ENCODE measurements at regions of chr15 and their contacts with region 1.

Region 1: DNA sequence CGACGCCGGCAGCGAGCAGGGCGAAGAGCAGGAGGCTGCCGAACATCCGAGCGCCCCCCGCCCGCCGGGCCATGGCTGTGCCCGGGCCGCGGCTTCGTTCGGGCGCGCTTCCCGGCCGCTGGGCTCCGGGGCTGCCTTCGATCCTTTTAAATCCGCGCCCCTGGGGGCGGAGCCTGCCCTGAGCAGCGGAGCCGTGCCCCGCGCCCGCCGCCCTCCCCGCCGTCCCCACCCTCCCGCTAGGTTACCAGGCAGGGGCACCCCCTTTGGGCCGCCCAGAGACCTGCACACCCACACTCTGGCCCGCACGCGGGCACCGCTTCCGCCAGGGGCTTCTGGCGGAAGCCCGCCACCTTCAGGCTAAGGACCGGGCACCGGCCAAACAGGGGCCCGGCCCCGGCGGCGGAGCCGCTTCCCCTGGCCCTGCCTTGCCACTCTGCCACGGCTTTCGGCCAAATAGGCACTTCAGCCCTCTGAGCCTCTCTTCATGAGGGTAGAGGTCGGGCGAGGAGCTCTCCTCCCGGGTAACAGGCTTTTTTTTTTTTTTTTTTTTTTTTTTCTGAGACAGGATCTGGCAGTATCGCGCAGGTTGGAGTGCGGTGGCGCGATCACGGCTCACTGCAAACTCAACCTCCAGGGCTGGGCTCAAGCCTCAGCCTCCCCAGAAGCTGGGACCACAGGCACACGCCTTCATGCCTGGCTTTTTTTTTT is at the start of gene NMB:
- DNase-seq: peak; percentile 83
- ATAC-seq: peak; percentile 64 to 73
- total RNA-seq, gene NMB: 14.7 to 31.6 TPM

Region 2: GRCh38 chr15:84594617-84595290 is 63.5 kb before region 1 on chr15:
- intact Hi-C with region 1: no loop called
- DNase-seq: no peak
- ATAC-seq: no peak

Region 3: DNA sequence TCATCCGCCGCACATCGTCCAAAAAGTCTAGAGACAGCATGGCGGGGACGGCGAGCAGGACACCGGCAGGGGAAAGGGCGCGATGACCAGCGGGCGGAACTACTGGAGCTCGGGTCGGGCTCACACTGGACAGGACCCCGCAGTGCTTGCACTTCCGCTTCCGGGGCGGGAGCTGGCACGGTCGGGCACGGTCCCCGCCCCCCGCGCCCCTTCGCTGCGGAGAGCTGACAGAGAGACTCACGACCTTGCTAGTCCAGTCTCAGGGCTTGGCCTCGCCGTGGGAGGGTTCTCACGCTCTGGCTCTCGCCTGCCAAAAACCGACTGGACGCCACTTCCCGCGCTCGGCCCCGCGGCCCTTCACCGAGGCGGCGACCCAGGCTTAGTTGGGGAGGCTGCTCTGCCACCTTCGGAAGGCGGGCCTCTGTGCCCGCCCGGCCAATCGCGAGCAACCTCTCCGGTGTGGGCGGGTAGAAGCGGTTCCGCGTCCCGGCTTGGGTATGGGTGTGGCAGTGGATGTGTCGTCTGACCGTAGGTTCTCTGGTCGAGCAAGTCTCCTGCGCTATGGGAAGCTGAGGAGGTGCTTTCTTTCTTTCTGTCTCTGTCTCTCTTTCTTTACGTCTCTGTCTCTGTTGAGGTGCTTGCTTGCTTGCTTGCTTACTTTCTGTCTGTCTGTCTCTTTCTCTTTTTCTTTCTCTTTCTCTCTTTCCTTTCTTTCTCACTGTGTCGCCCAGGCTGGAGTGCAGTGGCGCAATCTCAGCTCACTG is 58.0 kb after region 1 on chr15 and contains the start of gene SEC11A:
- intact Hi-C with region 1: loop called (anchors 10 kb)
- DNase-seq: peak; percentile 96
- ATAC-seq: peak; percentile 98 to 99
- total RNA-seq, gene SEC11A: 98.1 to 104 TPM

Region 4: GRCh38 chr15:84929744-84930371 is 271.6 kb after region 1 on chr15:
- intact Hi-C with region 1: loop called in 1 of 2 experiments (anchors 10 kb)
- DNase-seq: no peak
- ATAC-seq: no peak

Measured in left cardiac atrium (tissue), 4 donors.